Endothelial cell of umbilical vein (primary cell): ENCODE measurements at regions of chr3 and their contacts with region 1.

Region 1: GRCh38 chr3:40971191-40972168 is 227.8 kb upstream of the CTNNB1 start:
- DNase-seq: peak; percentile 99
- H3K4me3 ChIP-seq: no peak overlapping the region
- H3K27ac ChIP-seq: peak overlapping the region; percentile 91
- H3K4me1 ChIP-seq: peaks cover 57% of the 10 kb centered on the region
- H3K27me3 ChIP-seq: no peaks in the 10 kb centered on the region
- CTCF ChIP-seq: no peak
- POLR2A ChIP-seq: peak; percentile 31

Region 2: GRCh38 chr3:40317061-40317855 is 654.2 kb before region 1 on chr3:
- CTCF ChIA-PET with region 1: no interaction called
- POLR2A ChIA-PET with region 1: no interaction called
- dilution Hi-C with region 1: no loop called
- intact Hi-C with region 1: loop called (anchors 10 kb)
- DNase-seq: peak; percentile 64
- H3K4me3 ChIP-seq: no peak overlapping the region
- H3K27ac ChIP-seq: no peak overlapping the region
- H3K4me1 ChIP-seq: no peaks in the 10 kb centered on the region
- H3K27me3 ChIP-seq: no peaks in the 10 kb centered on the region
- CTCF ChIP-seq: peak; percentile 61 to 75
- POLR2A ChIP-seq: no peak

Region 3: DNA sequence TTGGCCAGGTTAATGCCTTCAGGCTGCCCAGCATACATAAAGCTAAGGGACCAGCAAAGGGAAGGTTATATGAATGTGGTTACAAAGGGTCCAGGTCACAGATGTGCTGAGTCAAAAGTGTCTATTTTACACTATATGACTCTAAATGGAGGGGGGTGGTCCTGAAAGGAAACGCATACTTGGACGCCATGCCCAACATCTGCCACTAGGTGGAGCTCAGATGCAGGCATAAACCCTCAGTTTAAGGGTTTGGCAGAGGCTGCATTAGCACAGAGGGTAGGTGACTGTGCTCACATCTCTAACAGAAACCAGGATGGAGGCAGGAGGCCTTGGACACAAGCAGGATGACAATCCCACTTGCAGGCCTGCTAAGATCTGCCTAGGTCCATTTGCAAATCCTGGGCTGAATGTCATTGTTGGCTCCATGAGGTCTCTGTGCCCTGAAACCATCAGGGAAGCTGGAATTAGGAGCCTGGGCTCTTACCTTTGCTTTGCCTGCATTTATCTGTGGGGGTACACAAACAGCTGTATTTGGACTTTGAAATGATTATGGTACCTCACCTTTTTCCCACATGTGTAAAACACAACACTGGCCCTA is 390.9 kb before region 1 on chr3:
- CTCF ChIA-PET with region 1: no interaction called
- POLR2A ChIA-PET with region 1: no interaction called
- dilution Hi-C with region 1: no loop called
- intact Hi-C with region 1: loop called (anchors 2 kb)
- DNase-seq: peak; percentile 72
- H3K4me3 ChIP-seq: no peak overlapping the region
- H3K27ac ChIP-seq: no peak overlapping the region
- H3K4me1 ChIP-seq: no peaks in the 10 kb centered on the region
- H3K27me3 ChIP-seq: peaks cover 0 to 4% of the 10 kb centered on the region in 2 experiments
- CTCF ChIP-seq: peak; percentile 84 to 96
- POLR2A ChIP-seq: no peak

Region 4: GRCh38 chr3:40877631-40878463 is 93.6 kb before region 1 on chr3:
- CTCF ChIA-PET with region 1: no interaction called
- POLR2A ChIA-PET with region 1: interaction called, 3 read pairs
- dilution Hi-C with region 1: no loop called
- intact Hi-C with region 1: loop called (anchors 1 kb)
- DNase-seq: peak; percentile 94
- H3K4me3 ChIP-seq: no peak overlapping the region
- H3K27ac ChIP-seq: peak overlapping the region; percentile 49
- H3K4me1 ChIP-seq: peaks cover 20% of the 10 kb centered on the region
- H3K27me3 ChIP-seq: no peaks in the 10 kb centered on the region
- CTCF ChIP-seq: no peak
- POLR2A ChIP-seq: peak; percentile 53

Region 5: GRCh38 chr3:40899286-40899712 is 72.2 kb before region 1 on chr3:
- CTCF ChIA-PET with region 1: no interaction called
- POLR2A ChIA-PET with region 1: no interaction called
- dilution Hi-C with region 1: no loop called
- intact Hi-C with region 1: no loop called
- DNase-seq: no peak
- H3K4me3 ChIP-seq: no peak overlapping the region
- H3K27ac ChIP-seq: no peak overlapping the region
- H3K4me1 ChIP-seq: no peaks in the 10 kb centered on the region
- H3K27me3 ChIP-seq: no peaks in the 10 kb centered on the region
- CTCF ChIP-seq: no peak
- POLR2A ChIP-seq: no peak

Region 6: GRCh38 chr3:41117398-41117870 is 146.0 kb after region 1 on chr3:
- CTCF ChIA-PET with region 1: no interaction called
- POLR2A ChIA-PET with region 1: no interaction called
- dilution Hi-C with region 1: no loop called
- intact Hi-C with region 1: loop called (anchors 1 kb)
- DNase-seq: peak; percentile 89
- H3K4me3 ChIP-seq: no peak overlapping the region
- H3K27ac ChIP-seq: peak overlapping the region; percentile 23
- H3K4me1 ChIP-seq: peaks cover 17% of the 10 kb centered on the region
- H3K27me3 ChIP-seq: peaks cover 4 to 21% of the 10 kb centered on the region in 2 experiments
- CTCF ChIP-seq: no peak
- POLR2A ChIP-seq: no peak

Region 7: GRCh38 chr3:41224120-41224806 is 252.8 kb after region 1 on chr3:
- CTCF ChIA-PET with region 1: no interaction called
- POLR2A ChIA-PET with region 1: no interaction called
- dilution Hi-C with region 1: no loop called
- intact Hi-C with region 1: loop called (anchors 5 kb)
- DNase-seq: no peak
- H3K4me3 ChIP-seq: no peak overlapping the region
- H3K27ac ChIP-seq: no peak overlapping the region
- H3K4me1 ChIP-seq: peaks cover 4% of the 10 kb centered on the region
- H3K27me3 ChIP-seq: no peaks in the 10 kb centered on the region
- CTCF ChIP-seq: no peak
- POLR2A ChIP-seq: no peak